Ascending aorta (tissue), 2 donors: ENCODE measurements at regions of chr15 and their contacts with region 1.

Region 1: DNA sequence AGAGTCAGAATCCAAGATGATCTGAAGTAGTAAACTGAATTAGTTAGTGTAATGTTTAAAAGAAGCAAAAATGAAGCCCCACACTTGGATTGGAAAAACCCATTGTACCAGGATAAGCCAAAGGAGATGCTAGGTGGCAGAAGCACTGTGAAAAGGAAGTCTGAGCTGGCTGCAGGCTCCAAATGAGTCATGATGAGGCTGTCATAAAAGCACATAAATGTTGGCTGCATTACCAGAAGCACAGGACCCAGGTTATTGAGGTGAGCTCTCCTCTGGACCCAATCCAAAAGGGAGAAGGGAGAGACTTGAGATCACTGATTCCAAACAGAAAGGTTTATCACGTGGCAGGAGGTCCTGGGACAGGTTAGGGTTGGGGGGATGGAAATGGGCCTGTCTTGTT is 3.2 kb upstream of the ACAN start:
- DNase-seq: peak in 1 of 2 donors; percentile 58
- H3K4me3 ChIP-seq: no peak overlapping the region
- H3K27ac ChIP-seq: no peak overlapping the region
- H3K4me1 ChIP-seq: peaks cover 2 to 3% of the 10 kb centered on the region in 2 donors
- H3K27me3 ChIP-seq: no peaks in the 10 kb centered on the region
- CTCF ChIP-seq: no peak

Region 2: GRCh38 chr15:88704791-88705768 is 94.9 kb before region 1 on chr15:
- intact Hi-C with region 1: loop called (anchors 5 kb)
- DNase-seq: peak; percentile 29 to 92
- H3K4me3 ChIP-seq: peak overlapping the region; percentile 59 to 64
- H3K27ac ChIP-seq: peak overlapping the region; percentile 81 to 91
- H3K4me1 ChIP-seq: peaks cover 3 to 26% of the 10 kb centered on the region in 2 donors
- H3K27me3 ChIP-seq: no peaks in the 10 kb centered on the region
- CTCF ChIP-seq: no peak